ENCODE measurements at regions of chr5 and their contacts with region 1.

Region 1: GRCh38 chr5:141557681-141558136 is 61.1 kb downstream of the DIAPH1 start:
- DNase-seq: peak; percentile 55 to 89 (median 72)
- ATAC-seq: peak; percentile 88
- H3K4me3 ChIP-seq: no peak overlapping the region
- H3K4me3 Mint-ChIP-seq: no peak overlapping the region
- H3K27ac ChIP-seq: peak overlapping the region in 1 of 2 donors; percentile 20
- H3K27ac Mint-ChIP-seq: peak overlapping the region; percentile 71
- H3K4me1 ChIP-seq: peaks cover 19% of the 10 kb centered on the region
- H3K4me1 Mint-ChIP-seq: peaks cover 33% of the 10 kb centered on the region
- H3K27me3 ChIP-seq: no peaks in the 10 kb centered on the region
- H3K27me3 Mint-ChIP-seq: no peaks in the 10 kb centered on the region
- CTCF ChIP-seq: peak; percentile 88

Region 2: DNA sequence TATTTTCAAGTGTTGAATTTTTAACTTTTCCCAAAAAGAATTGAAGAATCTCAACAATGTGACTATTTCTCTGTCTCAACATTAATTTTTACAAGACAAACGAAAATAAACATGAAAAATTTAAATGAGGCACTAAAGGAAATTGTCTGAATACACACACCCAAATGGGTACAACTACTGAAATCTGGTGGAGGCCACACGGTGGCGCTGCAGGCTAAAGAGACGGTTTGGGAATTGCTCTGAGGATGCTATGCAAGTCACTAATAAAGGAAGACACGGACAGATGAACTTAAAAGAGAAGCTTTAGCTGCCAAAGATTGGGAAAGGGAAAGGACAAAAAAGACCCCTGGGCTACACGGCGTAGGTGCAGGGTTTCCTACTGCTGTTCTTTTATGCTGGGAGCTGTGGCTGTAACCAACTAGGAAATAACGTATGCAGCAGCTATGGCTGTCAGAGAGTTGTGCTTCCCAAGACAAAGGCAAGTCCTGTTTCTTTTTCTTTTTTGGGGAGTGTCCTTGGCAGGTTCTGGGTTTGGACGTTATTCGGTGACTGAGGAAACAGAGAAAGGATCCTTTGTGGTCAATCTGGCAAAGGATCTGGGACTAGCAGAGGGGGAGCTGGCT is 365.5 kb before region 1 on chr5 and contains the start of gene PCDHB10:
- CTCF ChIA-PET with region 1: no interaction called
- POLR2A ChIA-PET with region 1: no interaction called
- intact Hi-C with region 1: loop called in 1 of 2 experiments (anchors 10 kb)
- DNase-seq: peak in 3 of 14 experiments; percentile 19 to 25 (median 25)
- ATAC-seq: no peak
- H3K4me3 ChIP-seq: no peak within 1 kb of the TSS
- H3K4me3 Mint-ChIP-seq: no peak within 1 kb of the TSS
- H3K27ac ChIP-seq: no peak within 1 kb of the TSS
- H3K27ac Mint-ChIP-seq: no peak within 1 kb of the TSS
- H3K4me1 ChIP-seq: no peaks in the 10 kb centered on the region
- H3K4me1 Mint-ChIP-seq: peaks cover under 1% of the 10 kb centered on the region
- H3K27me3 ChIP-seq: peaks cover 13 to 14% of the 10 kb centered on the region in 2 experiments
- H3K27me3 Mint-ChIP-seq: peaks cover 74% of the 10 kb centered on the region
- CTCF ChIP-seq: peak; percentile 23
- total RNA-seq, gene PCDHB10: not detected

Region 3: DNA sequence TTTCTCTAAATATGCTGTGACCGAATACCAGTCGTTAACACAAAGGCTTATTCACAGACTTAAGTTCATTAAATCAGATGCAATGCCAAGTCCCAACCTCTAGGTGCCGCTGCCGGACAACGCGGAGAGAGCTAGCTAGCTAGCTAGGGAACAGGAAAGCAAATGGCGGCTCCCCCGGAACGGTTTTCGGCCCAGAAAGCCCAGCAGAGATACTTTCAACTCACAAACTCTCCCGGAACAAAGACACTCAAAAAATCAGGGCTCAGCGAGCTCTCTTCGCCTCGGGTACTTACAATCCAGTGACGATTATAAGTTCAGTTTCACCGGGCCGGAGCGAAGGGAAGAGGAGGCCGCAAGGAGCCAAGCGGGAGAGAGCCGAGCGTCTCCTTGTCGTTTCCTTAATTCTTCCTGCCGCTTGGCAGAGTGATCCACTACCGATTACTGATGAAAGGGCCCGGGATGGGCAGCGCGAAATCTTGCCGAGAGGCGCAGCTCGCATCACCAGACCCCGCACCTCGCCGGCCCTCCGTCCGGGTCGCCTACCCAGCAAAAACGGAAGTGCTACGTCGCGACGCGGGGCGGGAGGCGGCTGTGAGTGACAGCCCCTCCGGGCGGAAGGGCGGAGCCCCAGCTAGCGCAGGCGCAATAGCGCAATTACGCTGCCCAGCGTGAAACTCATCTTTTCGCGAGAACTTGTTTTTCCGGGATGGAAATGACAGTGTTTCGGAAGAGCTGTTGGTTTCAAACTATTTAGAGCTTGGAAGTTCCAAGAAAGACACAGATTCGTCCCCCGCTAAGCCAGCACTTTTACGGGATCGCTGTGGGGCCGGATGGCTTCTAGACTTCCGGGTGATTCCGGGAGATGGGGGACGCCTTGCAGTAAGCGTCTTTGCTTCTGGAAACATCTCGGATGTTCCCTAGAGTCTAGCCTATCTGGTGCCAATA is 237.2 kb before region 1 on chr5 and contains the start of gene TAF7:
- CTCF ChIA-PET with region 1: interaction called, 12 read pairs
- POLR2A ChIA-PET with region 1: interaction called, 14 read pairs
- intact Hi-C with region 1: loop called in 1 of 2 experiments (anchors 2 kb)
- DNase-seq: peak; percentile 85 to 96 (median 91)
- ATAC-seq: peak; percentile 87
- H3K4me3 ChIP-seq: peak within 1 kb of the TSS; percentile 78
- H3K4me3 Mint-ChIP-seq: peak within 1 kb of the TSS; percentile 95
- H3K27ac ChIP-seq: peak within 1 kb of the TSS; percentile 93 to 99
- H3K27ac Mint-ChIP-seq: peak within 1 kb of the TSS; percentile 97
- H3K4me1 ChIP-seq: peaks cover 14% of the 10 kb centered on the region
- H3K4me1 Mint-ChIP-seq: peaks cover 37% of the 10 kb centered on the region
- H3K27me3 ChIP-seq: no peaks in the 10 kb centered on the region
- H3K27me3 Mint-ChIP-seq: no peaks in the 10 kb centered on the region
- CTCF ChIP-seq: peak; percentile 80
- total RNA-seq, gene TAF7: 80.5 TPM

Region 4: GRCh38 chr5:141398608-141399007 is 159.1 kb before region 1 on chr5:
- CTCF ChIA-PET with region 1: interaction called, 11 read pairs
- POLR2A ChIA-PET with region 1: no interaction called
- intact Hi-C with region 1: no loop called
- DNase-seq: no peak
- ATAC-seq: no peak
- H3K4me3 ChIP-seq: no peak overlapping the region
- H3K4me3 Mint-ChIP-seq: no peak overlapping the region
- H3K27ac ChIP-seq: no peak overlapping the region
- H3K27ac Mint-ChIP-seq: no peak overlapping the region
- H3K4me1 ChIP-seq: no peaks in the 10 kb centered on the region
- H3K4me1 Mint-ChIP-seq: peaks cover 3% of the 10 kb centered on the region
- H3K27me3 ChIP-seq: peaks cover 55 to 80% of the 10 kb centered on the region in 2 experiments
- H3K27me3 Mint-ChIP-seq: peaks cover 80% of the 10 kb centered on the region
- CTCF ChIP-seq: no peak

Region 5: GRCh38 chr5:141547488-141547887 is 10.2 kb before region 1 on chr5:
- CTCF ChIA-PET with region 1: interaction called, 16 read pairs
- POLR2A ChIA-PET with region 1: interaction called, 3 read pairs
- intact Hi-C with region 1: no loop called
- DNase-seq: no peak
- ATAC-seq: no peak
- H3K4me3 ChIP-seq: no peak overlapping the region
- H3K4me3 Mint-ChIP-seq: no peak overlapping the region
- H3K27ac ChIP-seq: no peak overlapping the region
- H3K27ac Mint-ChIP-seq: no peak overlapping the region
- H3K4me1 ChIP-seq: peaks cover 7% of the 10 kb centered on the region
- H3K4me1 Mint-ChIP-seq: peaks cover 58% of the 10 kb centered on the region
- H3K27me3 ChIP-seq: no peaks in the 10 kb centered on the region
- H3K27me3 Mint-ChIP-seq: no peaks in the 10 kb centered on the region
- CTCF ChIP-seq: no peak

Measured in CD4-positive, alpha-beta T cell (primary cell).